ENCODE measurements at regions of chr1 and their contacts with region 1.

Region 1: DNA sequence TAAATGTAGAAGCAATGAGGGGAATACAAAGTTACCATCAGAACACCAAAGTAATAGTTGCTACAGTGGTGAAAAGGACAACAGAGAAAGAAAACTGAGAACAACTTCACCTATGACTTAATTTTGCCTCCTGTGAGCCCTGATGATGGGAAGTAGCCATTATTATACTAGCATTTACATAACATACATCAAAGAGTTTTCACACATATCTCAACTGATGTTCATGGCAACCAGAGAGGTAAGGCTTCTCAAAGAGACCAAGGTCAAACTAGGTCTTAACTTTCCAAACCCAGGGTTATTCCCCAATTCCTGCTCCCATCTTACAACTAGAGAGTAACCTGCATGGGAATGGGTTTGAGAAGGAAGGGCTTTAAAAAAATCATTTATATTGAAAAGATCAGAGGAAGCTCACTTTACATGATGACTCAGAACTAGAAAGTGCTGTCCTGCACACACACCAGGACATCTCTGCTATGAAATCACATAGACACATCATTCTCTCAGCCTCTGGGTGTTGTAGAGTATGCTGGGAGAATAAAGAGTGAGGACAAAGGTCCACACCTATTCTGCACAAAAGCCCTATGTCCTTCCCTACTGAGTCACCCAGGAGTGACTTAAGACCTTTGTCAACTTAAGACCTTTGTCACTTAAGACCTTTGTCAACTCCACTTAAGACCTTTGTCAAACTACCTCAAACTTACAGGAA is 179.7 kb downstream of the TNFSF18 start:
- DNase-seq: peak in 1 of 5 donors; percentile 1
- H3K4me3 ChIP-seq: no peak overlapping the region
- H3K4me3 Mint-ChIP-seq: no peak overlapping the region
- H3K27ac ChIP-seq: no peak overlapping the region
- H3K27ac Mint-ChIP-seq: peak overlapping the region in 2 of 7 donors; percentile 4 to 6
- H3K4me1 ChIP-seq: peaks cover 24% of the 10 kb centered on the region
- H3K4me1 Mint-ChIP-seq: peaks cover 18 to 29% (median 25%) of the 10 kb centered on the region in 4 donors
- H3K27me3 ChIP-seq: no peaks in the 10 kb centered on the region
- H3K27me3 Mint-ChIP-seq: no peaks in the 10 kb centered on the region

Region 2: GRCh38 chr1:172753964-172754363 is 117.1 kb before region 1 on chr1:
- CTCF ChIA-PET with region 1: no interaction called
- POLR2A ChIA-PET with region 1: no interaction called
- intact Hi-C with region 1: no loop called
- DNase-seq: no peak
- H3K4me3 ChIP-seq: no peak overlapping the region
- H3K4me3 Mint-ChIP-seq: no peak overlapping the region
- H3K27ac ChIP-seq: no peak overlapping the region
- H3K27ac Mint-ChIP-seq: peak overlapping the region in 1 of 7 donors; percentile 9
- H3K4me1 ChIP-seq: no peaks in the 10 kb centered on the region
- H3K4me1 Mint-ChIP-seq: peaks cover 0 to 3% (median 2%) of the 10 kb centered on the region in 4 donors
- H3K27me3 ChIP-seq: no peaks in the 10 kb centered on the region
- H3K27me3 Mint-ChIP-seq: peaks cover 3 to 14% of the 10 kb centered on the region in 2 donors

Region 3: DNA sequence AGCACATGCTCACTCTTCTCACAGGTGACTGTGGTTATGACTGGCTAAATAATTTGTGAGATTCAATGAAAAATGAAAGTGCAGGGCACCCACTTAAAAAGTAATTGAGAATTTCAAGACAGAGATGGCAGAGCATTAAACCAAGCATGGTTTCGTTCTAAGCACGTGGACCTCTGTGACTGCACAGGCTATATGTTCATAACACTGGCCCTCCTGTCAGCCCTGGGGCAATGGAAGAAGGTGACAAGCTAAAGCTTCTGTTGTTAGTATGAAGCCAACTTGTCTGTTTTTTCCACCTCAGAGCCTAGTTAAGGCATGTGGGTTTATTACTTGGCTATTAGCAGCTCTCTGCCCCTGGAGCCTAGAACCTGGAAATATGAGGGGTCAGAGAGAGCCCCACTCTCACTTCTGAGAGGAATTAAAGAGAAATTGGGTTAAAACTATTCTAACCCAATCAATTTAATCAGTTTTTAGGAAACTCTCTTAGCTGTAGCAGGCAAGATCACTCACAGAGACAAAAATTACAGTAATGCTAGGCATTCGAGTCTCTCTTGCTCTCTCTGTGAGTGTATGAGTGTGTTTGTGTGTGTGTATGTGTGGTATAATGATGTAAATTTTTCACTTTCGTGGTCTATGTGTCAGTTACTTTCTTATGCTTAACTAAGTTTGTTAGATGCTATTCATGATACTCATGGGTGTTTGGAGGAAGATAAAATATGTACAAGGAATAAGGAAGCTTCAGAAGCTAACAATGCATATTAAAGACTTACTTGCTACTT is 81.0 kb before region 1 on chr1:
- CTCF ChIA-PET with region 1: no interaction called
- POLR2A ChIA-PET with region 1: no interaction called
- intact Hi-C with region 1: no loop called
- DNase-seq: no peak
- H3K4me3 ChIP-seq: no peak overlapping the region
- H3K4me3 Mint-ChIP-seq: no peak overlapping the region
- H3K27ac ChIP-seq: no peak overlapping the region
- H3K27ac Mint-ChIP-seq: no peak overlapping the region
- H3K4me1 ChIP-seq: no peaks in the 10 kb centered on the region
- H3K4me1 Mint-ChIP-seq: no peaks in the 10 kb centered on the region
- H3K27me3 ChIP-seq: no peaks in the 10 kb centered on the region
- H3K27me3 Mint-ChIP-seq: no peaks in the 10 kb centered on the region

Region 4: DNA sequence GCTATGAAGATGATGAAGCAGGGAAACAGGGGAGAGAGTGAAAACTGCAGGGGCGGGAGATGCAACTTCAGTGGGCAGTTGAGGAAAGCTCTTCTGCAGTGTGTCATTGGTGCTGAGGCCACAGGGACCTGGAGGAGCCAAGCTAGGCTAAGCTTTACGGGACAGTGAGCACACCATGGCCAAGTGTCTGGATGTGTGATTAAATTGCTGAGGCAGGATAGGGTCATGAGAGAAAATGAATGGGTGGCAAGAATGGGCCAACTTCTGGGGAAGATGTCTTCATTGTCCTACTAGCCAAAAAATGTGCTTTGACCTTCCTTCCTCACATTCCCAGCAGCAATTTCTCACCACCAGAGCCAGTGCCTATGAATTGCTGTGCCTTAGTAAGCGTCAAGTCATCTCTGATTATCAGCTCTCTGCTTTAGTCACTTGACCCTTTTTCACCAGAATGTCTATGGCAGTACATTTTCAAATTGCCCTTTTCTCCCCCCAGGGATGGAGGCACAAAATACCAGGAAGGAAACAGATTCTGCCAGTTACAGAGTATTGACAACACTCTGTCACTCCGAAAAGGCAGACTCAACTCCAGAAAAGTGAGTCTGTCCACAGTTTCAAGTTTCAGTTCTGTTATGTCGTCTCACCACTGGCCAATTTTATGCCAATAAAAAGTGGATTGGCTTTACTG is 12.2 kb after region 1 on chr1:
- CTCF ChIA-PET with region 1: no interaction called
- POLR2A ChIA-PET with region 1: no interaction called
- intact Hi-C with region 1: loop called (anchors 2 kb)
- DNase-seq: no peak
- H3K4me3 ChIP-seq: no peak overlapping the region
- H3K4me3 Mint-ChIP-seq: peak overlapping the region; percentile 6 to 78 (median 54)
- H3K27ac ChIP-seq: no peak overlapping the region
- H3K27ac Mint-ChIP-seq: peak overlapping the region in 2 of 7 donors; percentile 13 to 19
- H3K4me1 ChIP-seq: peaks cover 17% of the 10 kb centered on the region
- H3K4me1 Mint-ChIP-seq: peaks cover 8 to 16% (median 12%) of the 10 kb centered on the region in 4 donors
- H3K27me3 ChIP-seq: no peaks in the 10 kb centered on the region
- H3K27me3 Mint-ChIP-seq: peaks cover 0 to 5% of the 10 kb centered on the region in 2 donors